ENCODE measurements at regions of chr4 and their contacts with region 1.

Region 1: GRCh38 chr4:48949518-48950219 is 36.4 kb upstream of the CWH43 start:
- DNase-seq: no peak
- ATAC-seq: no peak
- H3K4me3 ChIP-seq: no peak overlapping the region
- H3K27ac ChIP-seq: no peak overlapping the region
- H3K4me1 ChIP-seq: no peaks in the 10 kb centered on the region
- H3K27me3 ChIP-seq: no peaks in the 10 kb centered on the region
- CTCF ChIP-seq: no peak

Region 2: GRCh38 chr4:48470570-48470969 is 479.1 kb before region 1 on chr4:
- intact Hi-C with region 1: no loop called
- DNase-seq: no peak
- ATAC-seq: no peak
- H3K4me3 ChIP-seq: no peak overlapping the region
- H3K27ac ChIP-seq: no peak overlapping the region
- H3K4me1 ChIP-seq: peaks cover 0 to under 1% (median 0%) of the 10 kb centered on the region in 9 donors
- H3K27me3 ChIP-seq: no peaks in the 10 kb centered on the region
- CTCF ChIP-seq: no peak

Region 3: GRCh38 chr4:48906206-48907173 is 43.2 kb before region 1 on chr4 and contains the start of gene OCIAD2:
- intact Hi-C with region 1: loop called in 1 of 10 experiments (anchors 10 kb)
- DNase-seq: peak; percentile 50 to 63
- ATAC-seq: peak; percentile 81 to 92 (median 88)
- H3K4me3 ChIP-seq: peak within 1 kb of the TSS; percentile 40 to 84 (median 70)
- H3K27ac ChIP-seq: peak within 1 kb of the TSS in 9 of 10 donors; percentile 46 to 80 (median 71)
- H3K4me1 ChIP-seq: peaks cover 0 to 19% (median 12%) of the 10 kb centered on the region in 9 donors
- H3K27me3 ChIP-seq: no peaks in the 10 kb centered on the region
- CTCF ChIP-seq: peak in 4 of 9 donors; percentile 25 to 46 (median 36)
- total RNA-seq, gene OCIAD2: 11.4 to 30.2 (median 14.8) TPM